ENCODE measurements at regions of chr2 and their contacts with region 1.

Region 1: DNA sequence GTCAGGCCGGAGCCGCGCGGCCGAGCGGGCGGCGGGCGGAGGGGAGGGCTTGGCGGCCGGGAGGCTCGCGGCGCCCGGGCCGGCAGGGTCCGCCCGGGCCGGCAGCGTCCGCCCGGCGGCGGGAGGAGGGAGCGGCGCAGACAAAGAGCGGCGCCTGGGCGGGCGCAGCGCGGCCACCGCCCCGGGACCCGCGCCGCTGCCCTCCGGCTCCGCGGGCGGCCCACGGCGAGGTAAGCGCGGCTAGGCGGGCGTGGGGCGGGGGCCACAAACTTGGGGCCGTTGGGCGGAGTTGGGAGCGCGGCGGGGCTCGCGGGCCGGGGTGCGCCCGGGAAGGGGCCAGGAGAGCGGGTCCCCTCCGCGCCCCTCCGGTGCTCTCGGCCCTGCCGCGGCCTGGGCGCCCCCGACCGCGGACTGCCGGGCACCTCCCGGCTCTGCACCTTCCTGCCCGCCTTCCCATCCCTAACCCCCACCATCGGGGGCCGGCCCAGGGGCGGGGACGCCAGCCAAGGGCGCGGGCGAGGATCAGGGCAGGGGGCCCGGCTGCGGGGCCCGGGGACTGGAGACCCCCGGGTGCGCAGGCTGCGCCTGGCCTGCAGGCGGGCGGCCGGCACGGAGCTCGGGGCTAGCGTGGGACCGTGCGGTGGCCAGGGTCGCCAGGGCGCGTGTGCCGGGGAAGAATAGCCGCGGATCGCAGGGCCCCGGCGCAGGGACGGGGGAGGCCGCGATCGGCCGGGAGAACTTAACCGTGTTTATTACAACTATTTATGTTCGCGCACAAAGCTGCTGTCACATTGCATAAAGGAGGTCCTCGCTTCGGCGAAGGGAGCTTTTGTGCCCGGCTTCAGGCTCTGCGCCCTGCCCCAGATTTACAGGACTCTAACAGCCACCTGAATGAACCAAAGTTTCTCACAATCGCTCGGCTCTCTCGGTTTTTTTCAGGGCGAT is at the start of gene NCK2:
- DNase-seq: no peak
- H3K4me3 Mint-ChIP-seq: peak within 1 kb of the TSS; percentile 89
- H3K27ac Mint-ChIP-seq: peak within 1 kb of the TSS; percentile 95
- H3K4me1 Mint-ChIP-seq: peaks cover 67% of the 10 kb centered on the region
- H3K27me3 Mint-ChIP-seq: no peaks in the 10 kb centered on the region
- total RNA-seq, gene NCK2: 72.4 and 73.9 TPM in 2 replicates

Region 2: DNA sequence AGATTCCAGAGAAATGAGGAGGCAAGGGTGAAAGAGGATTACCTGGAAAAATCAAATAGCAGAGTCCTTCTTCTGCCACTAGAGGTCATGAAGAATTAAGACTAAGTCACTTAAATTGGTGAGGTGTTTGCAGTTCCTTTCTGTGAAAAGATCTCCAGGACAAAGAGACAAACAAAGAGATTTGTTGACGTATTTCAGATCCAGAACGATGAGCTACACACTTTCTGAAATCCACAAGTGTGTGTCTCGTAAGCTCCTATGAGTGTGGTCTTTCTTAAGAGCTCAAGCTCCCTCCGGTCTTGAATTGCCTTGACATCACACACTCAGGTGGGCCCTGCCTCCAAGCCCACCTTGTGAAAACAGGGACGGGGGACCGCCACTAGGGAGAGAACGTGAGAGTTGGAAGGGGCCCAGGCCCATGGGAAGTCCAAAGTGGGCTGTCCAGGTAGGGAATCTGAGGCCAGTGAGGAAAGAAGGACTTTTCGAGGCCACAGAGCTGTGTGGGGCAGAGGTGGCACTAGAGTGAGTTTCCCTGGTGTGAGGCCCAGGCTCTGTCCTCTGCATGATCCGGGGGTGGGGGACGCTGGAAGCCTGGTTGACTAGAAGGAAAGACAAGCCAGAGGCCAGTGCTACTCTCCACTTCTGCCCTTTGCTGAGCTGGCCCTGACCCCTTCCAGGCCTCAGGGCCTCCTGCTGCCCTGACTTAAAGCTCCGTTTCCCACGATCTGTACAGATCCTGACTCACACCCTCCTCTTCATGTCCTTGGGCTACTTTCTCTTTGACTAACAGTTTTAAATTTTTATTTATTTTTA is 168.5 kb before region 1 on chr2:
- intact Hi-C with region 1: loop called (anchors 5 kb)
- DNase-seq: no peak
- H3K4me3 Mint-ChIP-seq: no peak overlapping the region
- H3K27ac Mint-ChIP-seq: peak overlapping the region; percentile 23
- H3K4me1 Mint-ChIP-seq: peaks cover 14% of the 10 kb centered on the region
- H3K27me3 Mint-ChIP-seq: peaks cover 12% of the 10 kb centered on the region

Region 3: GRCh38 chr2:105691947-105692390 is 53.2 kb before region 1 on chr2:
- intact Hi-C with region 1: no loop called
- DNase-seq: no peak
- H3K4me3 Mint-ChIP-seq: no peak overlapping the region
- H3K27ac Mint-ChIP-seq: no peak overlapping the region
- H3K4me1 Mint-ChIP-seq: no peaks in the 10 kb centered on the region
- H3K27me3 Mint-ChIP-seq: no peaks in the 10 kb centered on the region

Region 4: GRCh38 chr2:105769504-105769903 is 24.3 kb after region 1 on chr2:
- intact Hi-C with region 1: loop called (anchors 1 kb)
- DNase-seq: no peak
- H3K4me3 Mint-ChIP-seq: peak overlapping the region; percentile 45
- H3K27ac Mint-ChIP-seq: peak overlapping the region; percentile 91
- H3K4me1 Mint-ChIP-seq: peaks cover 74% of the 10 kb centered on the region
- H3K27me3 Mint-ChIP-seq: no peaks in the 10 kb centered on the region

Region 5: DNA sequence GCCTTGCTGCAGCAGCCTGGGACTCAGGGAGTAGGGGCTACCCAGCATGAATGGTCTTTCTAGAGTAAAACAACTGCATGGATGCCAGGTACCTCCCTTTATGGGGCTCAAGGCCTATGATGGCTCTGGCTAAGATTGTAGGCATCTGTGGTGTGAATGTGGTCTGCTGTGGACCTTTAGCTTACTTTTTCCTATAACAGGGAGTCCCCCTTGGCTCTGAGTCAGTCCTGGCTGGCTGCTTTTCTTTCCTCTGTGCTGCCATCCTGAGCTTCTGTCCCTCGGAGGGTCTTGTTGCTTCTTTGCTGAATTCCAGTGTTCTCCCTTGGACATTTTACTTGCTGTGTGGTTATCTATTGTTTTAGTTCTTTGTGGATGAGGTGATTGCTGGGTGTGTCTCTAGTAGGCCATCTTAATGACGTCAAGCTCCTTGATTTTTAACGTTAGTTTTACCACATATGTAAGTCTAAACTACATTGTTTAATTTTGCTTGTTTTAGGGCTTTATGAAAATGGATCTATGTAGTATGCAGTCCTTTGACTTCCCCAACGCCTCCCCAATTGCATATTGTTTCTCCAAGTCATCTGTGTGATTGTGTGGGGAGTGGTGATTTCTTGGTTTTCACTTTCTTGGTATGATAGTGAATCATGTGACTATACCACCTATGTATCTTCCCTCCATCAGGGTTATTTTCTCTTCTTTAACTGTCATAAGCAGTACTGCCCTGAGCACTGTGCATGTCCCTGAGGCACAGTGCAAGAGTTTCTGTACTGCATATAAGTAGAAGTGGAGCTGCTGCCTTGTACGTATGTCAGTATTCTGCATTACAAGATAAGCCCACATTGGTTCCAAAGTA is 91.9 kb after region 1 on chr2:
- intact Hi-C with region 1: loop called (anchors 2 kb)
- DNase-seq: no peak
- H3K4me3 Mint-ChIP-seq: peak overlapping the region; percentile 26
- H3K27ac Mint-ChIP-seq: peak overlapping the region; percentile 78
- H3K4me1 Mint-ChIP-seq: peaks cover 73% of the 10 kb centered on the region
- H3K27me3 Mint-ChIP-seq: no peaks in the 10 kb centered on the region

Region 6: DNA sequence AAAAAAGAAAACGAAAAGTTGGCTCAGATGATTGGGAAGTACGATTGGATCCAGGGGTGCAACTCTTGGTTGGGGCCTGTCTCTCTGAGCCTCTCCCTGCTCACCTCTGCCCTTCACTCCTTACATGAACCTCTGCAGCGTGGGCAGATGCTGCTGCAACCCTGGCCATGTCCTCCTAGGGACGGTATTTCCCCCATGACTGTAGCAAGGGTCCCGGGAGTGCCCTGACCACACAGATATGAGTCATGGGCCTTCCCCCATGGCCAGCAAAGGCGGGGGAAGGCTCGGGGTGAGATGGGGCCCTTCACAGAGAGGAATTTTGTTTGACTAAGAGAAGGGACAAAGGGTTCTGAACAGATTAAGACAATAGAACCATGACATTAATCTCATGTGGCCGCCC is 128.5 kb after region 1 on chr2:
- intact Hi-C with region 1: loop called (anchors 2 kb)
- DNase-seq: peak; percentile 18
- H3K4me3 Mint-ChIP-seq: peak overlapping the region; percentile 34
- H3K27ac Mint-ChIP-seq: peak overlapping the region; percentile 91
- H3K4me1 Mint-ChIP-seq: peaks cover 73% of the 10 kb centered on the region
- H3K27me3 Mint-ChIP-seq: no peaks in the 10 kb centered on the region